CD14-positive monocyte (primary cell): ENCODE measurements at regions of chr15 and their contacts with region 1.

Region 1: GRCh38 chr15:69760890-69761568 is 308.4 kb downstream of the RPLP1 start:
- DNase-seq: peak; percentile 98 to 100 (median 100)
- H3K4me3 ChIP-seq: peak overlapping the region in 1 of 3 experiments; percentile 22
- H3K4me3 Mint-ChIP-seq: peak overlapping the region in 1 of 2 donors; percentile 86
- H3K27ac ChIP-seq: peak overlapping the region; percentile 98 to 100
- H3K27ac Mint-ChIP-seq: peak overlapping the region; percentile 99 to 100 (median 100)
- H3K4me1 ChIP-seq: peaks cover 68 to 71% of the 10 kb centered on the region in 2 donors
- H3K4me1 Mint-ChIP-seq: peaks cover 70% of the 10 kb centered on the region
- H3K27me3 ChIP-seq: no peaks in the 10 kb centered on the region
- H3K27me3 Mint-ChIP-seq: peaks cover 2 to 4% (median 3%) of the 10 kb centered on the region in 3 donors
- CTCF ChIP-seq: no peak

Region 2: GRCh38 chr15:69609176-69609575 is 151.9 kb before region 1 on chr15:
- intact Hi-C with region 1: loop called in 1 of 2 experiments (anchors 2 kb)
- DNase-seq: peak; percentile 72 to 84 (median 78)
- H3K4me3 ChIP-seq: no peak overlapping the region
- H3K4me3 Mint-ChIP-seq: peak overlapping the region in 1 of 2 donors; percentile 7
- H3K27ac ChIP-seq: peak overlapping the region; percentile 54 to 93
- H3K27ac Mint-ChIP-seq: peak overlapping the region; percentile 97 to 99 (median 98)
- H3K4me1 ChIP-seq: peaks cover 79 to 90% of the 10 kb centered on the region in 2 donors
- H3K4me1 Mint-ChIP-seq: peaks cover 77% of the 10 kb centered on the region
- H3K27me3 ChIP-seq: no peaks in the 10 kb centered on the region
- H3K27me3 Mint-ChIP-seq: peaks cover 0 to 7% (median 5%) of the 10 kb centered on the region in 3 donors
- CTCF ChIP-seq: no peak

Region 3: DNA sequence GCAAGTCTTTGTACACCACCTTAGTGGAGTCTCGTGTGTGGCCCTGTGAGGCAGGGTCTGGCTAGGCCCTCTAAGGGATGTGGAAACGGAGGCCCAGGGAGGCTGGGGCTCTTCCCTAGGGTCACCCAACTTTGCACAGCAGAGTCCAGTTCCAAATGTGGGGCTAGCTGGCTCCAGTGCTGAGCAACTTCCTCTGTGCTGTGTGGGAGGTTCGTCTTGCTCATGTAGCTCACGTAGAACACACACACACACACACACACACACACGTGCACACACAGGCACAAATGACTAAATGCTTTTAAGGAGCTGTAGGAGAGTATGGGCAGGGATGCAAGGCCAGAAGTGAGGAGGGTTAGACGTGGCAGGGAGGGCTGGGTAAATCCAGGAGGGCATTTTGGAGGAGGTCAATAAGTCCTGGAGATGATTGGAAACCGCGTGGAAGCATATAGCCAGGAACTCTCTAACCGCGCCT is 94.6 kb before region 1 on chr15:
- intact Hi-C with region 1: loop called in 1 of 2 experiments (anchors 2 kb)
- DNase-seq: peak; percentile 86 to 91 (median 89)
- H3K4me3 ChIP-seq: peak overlapping the region in 1 of 3 experiments; percentile 56
- H3K4me3 Mint-ChIP-seq: peak overlapping the region; percentile 59 to 86
- H3K27ac ChIP-seq: peak overlapping the region; percentile 97 to 99
- H3K27ac Mint-ChIP-seq: peak overlapping the region; percentile 97 to 100 (median 99)
- H3K4me1 ChIP-seq: peaks cover 65 to 71% of the 10 kb centered on the region in 2 donors
- H3K4me1 Mint-ChIP-seq: peaks cover 65% of the 10 kb centered on the region
- H3K27me3 ChIP-seq: no peaks in the 10 kb centered on the region
- H3K27me3 Mint-ChIP-seq: peaks cover 2 to 4% (median 4%) of the 10 kb centered on the region in 3 donors
- CTCF ChIP-seq: no peak

Region 4: DNA sequence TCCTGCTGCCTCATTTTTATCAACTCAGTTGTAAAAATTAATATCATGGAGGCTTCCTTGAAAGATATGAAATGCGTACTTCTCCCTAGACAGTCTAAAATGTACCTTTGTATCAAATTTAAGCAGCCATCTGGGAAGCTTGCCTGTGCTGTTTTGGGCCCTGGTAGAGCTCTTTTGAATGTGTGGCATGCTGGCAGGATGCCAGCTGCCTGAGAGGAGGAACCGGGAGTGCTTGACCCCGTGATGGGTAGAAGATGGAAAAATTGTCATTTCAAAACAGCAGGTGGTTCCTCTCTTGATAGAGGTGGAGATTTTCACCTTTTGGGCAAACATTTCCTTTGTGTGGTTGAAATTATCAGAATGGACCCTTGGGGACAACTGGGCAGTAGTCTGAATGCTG is 63.1 kb before region 1 on chr15:
- intact Hi-C with region 1: no loop called
- DNase-seq: peak; percentile 56 to 76 (median 63)
- H3K4me3 ChIP-seq: no peak overlapping the region
- H3K4me3 Mint-ChIP-seq: no peak overlapping the region
- H3K27ac ChIP-seq: no peak overlapping the region
- H3K27ac Mint-ChIP-seq: peak overlapping the region in 6 of 7 donors; percentile 47 to 82 (median 56)
- H3K4me1 ChIP-seq: peaks cover 34 to 36% of the 10 kb centered on the region in 2 donors
- H3K4me1 Mint-ChIP-seq: peaks cover 31% of the 10 kb centered on the region
- H3K27me3 ChIP-seq: no peaks in the 10 kb centered on the region
- H3K27me3 Mint-ChIP-seq: peaks cover 0 to 2% (median 2%) of the 10 kb centered on the region in 3 donors
- CTCF ChIP-seq: no peak

Region 5: DNA sequence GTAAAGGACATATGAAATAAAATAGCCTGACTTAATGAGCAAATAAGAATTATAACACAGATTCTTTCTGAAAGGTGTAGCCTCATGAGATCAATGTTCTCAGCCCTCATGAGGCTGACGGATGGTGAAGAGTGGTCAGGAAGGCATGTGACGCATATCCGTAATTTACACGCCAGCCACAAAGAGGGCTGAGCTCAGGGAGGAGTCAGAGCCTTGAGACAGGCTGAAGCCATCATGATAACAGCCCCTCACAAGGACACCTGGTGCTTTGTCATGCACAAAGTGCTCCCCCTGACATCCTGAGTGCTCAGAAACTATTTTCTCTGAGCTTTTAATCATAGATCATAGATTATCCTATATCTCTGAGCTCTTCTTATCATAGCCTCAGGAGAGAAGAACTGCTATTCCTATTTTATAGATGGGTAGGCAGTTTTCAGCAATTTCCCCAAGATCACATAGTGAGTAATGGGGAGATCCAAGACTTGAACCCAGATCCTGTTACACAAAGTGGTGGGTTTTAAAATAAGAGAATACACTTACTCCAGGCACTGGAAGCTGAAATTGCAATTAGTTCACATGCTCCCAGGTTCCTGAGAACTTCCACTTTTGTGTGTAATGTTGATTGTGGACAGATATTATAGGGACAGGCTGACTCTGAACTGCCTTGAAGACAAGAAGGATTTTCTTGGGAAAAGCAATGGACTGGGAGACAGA is 41.3 kb before region 1 on chr15:
- intact Hi-C with region 1: loop called (anchors 2 to 5 kb)
- DNase-seq: peak; percentile 92 to 96 (median 93)
- H3K4me3 ChIP-seq: no peak overlapping the region
- H3K4me3 Mint-ChIP-seq: no peak overlapping the region
- H3K27ac ChIP-seq: peak overlapping the region; percentile 95
- H3K27ac Mint-ChIP-seq: peak overlapping the region; percentile 99 to 100 (median 100)
- H3K4me1 ChIP-seq: peaks cover 87 to 97% of the 10 kb centered on the region in 2 donors
- H3K4me1 Mint-ChIP-seq: peaks cover 93% of the 10 kb centered on the region
- H3K27me3 ChIP-seq: no peaks in the 10 kb centered on the region
- H3K27me3 Mint-ChIP-seq: peaks cover 0 to 4% (median 2%) of the 10 kb centered on the region in 3 donors
- CTCF ChIP-seq: no peak

Region 6: DNA sequence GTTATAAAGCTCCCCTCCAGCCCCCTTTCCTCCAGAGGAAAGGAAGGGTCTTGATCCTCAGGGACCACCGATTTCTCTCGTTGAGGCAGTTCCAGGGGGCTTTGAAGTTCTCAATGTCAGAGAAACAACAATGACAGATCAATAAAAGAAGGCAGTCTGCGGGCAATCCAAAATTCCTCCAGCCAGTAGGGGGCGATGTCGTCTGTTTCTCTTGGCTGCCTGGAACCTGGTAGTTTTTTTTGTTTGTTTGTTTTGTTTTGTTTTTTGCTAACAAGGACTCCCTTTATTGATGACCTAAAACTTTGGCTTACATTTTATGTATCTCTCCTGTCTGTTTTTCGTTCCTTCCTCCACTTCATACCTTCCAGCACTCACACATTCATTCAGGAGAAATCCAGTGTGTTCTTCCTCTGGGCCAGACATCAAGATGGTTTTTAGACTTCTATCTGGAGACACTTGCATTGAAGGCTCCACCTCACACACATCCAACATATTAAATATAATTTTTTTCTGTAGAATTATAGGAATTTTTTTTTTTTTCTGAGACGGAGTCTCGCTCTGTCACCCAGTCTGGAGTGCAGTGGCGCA is 31.8 kb before region 1 on chr15:
- intact Hi-C with region 1: loop called in 1 of 2 experiments (anchors 2 kb)
- DNase-seq: peak in 2 of 3 donors; percentile 48 to 58
- H3K4me3 ChIP-seq: no peak overlapping the region
- H3K4me3 Mint-ChIP-seq: no peak overlapping the region
- H3K27ac ChIP-seq: no peak overlapping the region
- H3K27ac Mint-ChIP-seq: peak overlapping the region in 6 of 7 donors; percentile 47 to 76 (median 66)
- H3K4me1 ChIP-seq: peaks cover 50 to 52% of the 10 kb centered on the region in 2 donors
- H3K4me1 Mint-ChIP-seq: peaks cover 58% of the 10 kb centered on the region
- H3K27me3 ChIP-seq: no peaks in the 10 kb centered on the region
- H3K27me3 Mint-ChIP-seq: peaks cover 0 to 4% (median 0%) of the 10 kb centered on the region in 3 donors
- CTCF ChIP-seq: peak; percentile 80

Region 7: DNA sequence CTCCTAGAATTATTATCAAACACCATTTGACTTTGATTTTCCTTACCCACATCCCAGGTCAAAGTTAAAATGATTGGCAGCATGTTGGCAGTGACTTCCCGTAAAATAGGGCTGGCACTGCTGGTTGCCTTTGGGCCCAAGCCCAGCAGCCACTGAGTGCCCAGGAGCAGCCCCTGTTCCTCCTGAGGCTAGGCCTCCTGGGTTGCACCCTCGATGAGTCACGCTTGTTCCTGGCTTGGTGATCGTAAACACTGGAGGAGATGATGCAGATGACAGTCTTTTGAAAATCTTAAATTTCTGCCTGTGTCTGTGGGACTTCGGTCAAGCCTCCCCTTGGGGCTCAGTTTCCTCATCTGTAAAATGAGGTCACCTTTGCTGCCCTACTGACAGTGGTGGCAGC is 46.7 kb after region 1 on chr15:
- intact Hi-C with region 1: loop called in 1 of 2 experiments (anchors 5 kb)
- DNase-seq: peak; percentile 76 to 90 (median 82)
- H3K4me3 ChIP-seq: no peak overlapping the region
- H3K4me3 Mint-ChIP-seq: no peak overlapping the region
- H3K27ac ChIP-seq: peak overlapping the region in 1 of 2 donors; percentile 76
- H3K27ac Mint-ChIP-seq: peak overlapping the region; percentile 77 to 92 (median 83)
- H3K4me1 ChIP-seq: peaks cover 39 to 49% of the 10 kb centered on the region in 2 donors
- H3K4me1 Mint-ChIP-seq: peaks cover 46% of the 10 kb centered on the region
- H3K27me3 ChIP-seq: no peaks in the 10 kb centered on the region
- H3K27me3 Mint-ChIP-seq: peaks cover 13 to 17% (median 14%) of the 10 kb centered on the region in 3 donors
- CTCF ChIP-seq: no peak

Region 8: GRCh38 chr15:70504299-70504951 is 743.4 kb after region 1 on chr15:
- intact Hi-C with region 1: loop called (anchors 5 to 10 kb)
- DNase-seq: peak; percentile 88 to 96 (median 93)
- H3K4me3 ChIP-seq: peak overlapping the region in 1 of 3 experiments; percentile 47
- H3K4me3 Mint-ChIP-seq: peak overlapping the region; percentile 45 to 74
- H3K27ac ChIP-seq: peak overlapping the region; percentile 50 to 73
- H3K27ac Mint-ChIP-seq: peak overlapping the region; percentile 87 to 96 (median 93)
- H3K4me1 ChIP-seq: peaks cover 64 to 67% of the 10 kb centered on the region in 2 donors
- H3K4me1 Mint-ChIP-seq: peaks cover 73% of the 10 kb centered on the region
- H3K27me3 ChIP-seq: peaks cover 0 to 2% of the 10 kb centered on the region in 2 donors
- H3K27me3 Mint-ChIP-seq: peaks cover 5 to 19% (median 15%) of the 10 kb centered on the region in 3 donors
- CTCF ChIP-seq: no peak